ENCODE measurements at regions of chr1 and their contacts with region 1.

Region 1: GRCh38 chr1:21216835-21217811 is 40.4 kb upstream of the EIF4G3 start:
- DNase-seq: peak; percentile 79
- H3K4me3 Mint-ChIP-seq: no peak overlapping the region
- H3K27ac Mint-ChIP-seq: peak overlapping the region; percentile 46
- H3K4me1 Mint-ChIP-seq: no peaks in the 10 kb centered on the region
- H3K27me3 Mint-ChIP-seq: no peaks in the 10 kb centered on the region

Region 2: DNA sequence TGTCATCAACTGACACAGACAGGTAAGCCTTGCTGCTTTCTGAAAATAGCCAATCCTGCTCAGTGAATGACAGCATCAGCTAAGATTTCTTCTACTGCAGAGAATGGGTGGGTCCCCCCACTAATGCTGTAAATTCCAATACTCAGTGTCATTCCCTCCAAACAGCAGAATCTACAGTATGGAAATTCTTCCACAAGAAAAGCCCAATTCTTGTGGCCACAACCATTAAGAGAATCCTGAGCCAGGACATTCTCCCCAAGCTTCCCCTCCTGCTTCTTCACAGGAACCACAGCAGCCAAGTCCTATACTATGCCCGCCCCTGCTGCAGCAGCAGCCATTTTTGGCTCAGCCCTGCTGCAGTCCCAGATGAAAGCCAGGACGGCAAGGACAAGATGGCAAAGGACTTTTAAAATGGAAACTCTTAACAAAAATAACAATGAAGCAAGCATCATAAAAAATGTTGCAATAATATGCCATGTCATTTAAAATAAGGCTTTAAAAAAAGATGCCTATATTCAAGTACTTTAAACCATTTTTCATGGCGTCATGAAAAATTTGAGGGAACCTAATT is 67.2 kb before region 1 on chr1:
- CTCF ChIA-PET with region 1: no interaction called
- POLR2A ChIA-PET with region 1: no interaction called
- DNase-seq: no peak
- H3K4me3 Mint-ChIP-seq: no peak overlapping the region
- H3K27ac Mint-ChIP-seq: no peak overlapping the region
- H3K4me1 Mint-ChIP-seq: peaks cover 4% of the 10 kb centered on the region
- H3K27me3 Mint-ChIP-seq: no peaks in the 10 kb centered on the region

Region 3: GRCh38 chr1:21200767-21201166 is 16.4 kb before region 1 on chr1:
- CTCF ChIA-PET with region 1: no interaction called
- POLR2A ChIA-PET with region 1: no interaction called
- DNase-seq: no peak
- H3K4me3 Mint-ChIP-seq: no peak overlapping the region
- H3K27ac Mint-ChIP-seq: no peak overlapping the region
- H3K4me1 Mint-ChIP-seq: no peaks in the 10 kb centered on the region
- H3K27me3 Mint-ChIP-seq: peaks cover 4% of the 10 kb centered on the region

Region 4: GRCh38 chr1:21232044-21232443 is 14.9 kb after region 1 on chr1:
- CTCF ChIA-PET with region 1: interaction called, 13 read pairs
- POLR2A ChIA-PET with region 1: no interaction called
- DNase-seq: peak; percentile 44
- H3K4me3 Mint-ChIP-seq: no peak overlapping the region
- H3K27ac Mint-ChIP-seq: peak overlapping the region; percentile 66
- H3K4me1 Mint-ChIP-seq: no peaks in the 10 kb centered on the region
- H3K27me3 Mint-ChIP-seq: no peaks in the 10 kb centered on the region

Measured in activated CD4-positive, alpha-beta T cell treated with anti-CD3 and anti-CD28 coated beads, Interleukin-2, amount 10 ng/mL, durations not matched to agents 7 days and 5 days (primary cell).